K562 (cell line): ENCODE measurements at regions of chr11 and their contacts with region 1.

Region 1: DNA sequence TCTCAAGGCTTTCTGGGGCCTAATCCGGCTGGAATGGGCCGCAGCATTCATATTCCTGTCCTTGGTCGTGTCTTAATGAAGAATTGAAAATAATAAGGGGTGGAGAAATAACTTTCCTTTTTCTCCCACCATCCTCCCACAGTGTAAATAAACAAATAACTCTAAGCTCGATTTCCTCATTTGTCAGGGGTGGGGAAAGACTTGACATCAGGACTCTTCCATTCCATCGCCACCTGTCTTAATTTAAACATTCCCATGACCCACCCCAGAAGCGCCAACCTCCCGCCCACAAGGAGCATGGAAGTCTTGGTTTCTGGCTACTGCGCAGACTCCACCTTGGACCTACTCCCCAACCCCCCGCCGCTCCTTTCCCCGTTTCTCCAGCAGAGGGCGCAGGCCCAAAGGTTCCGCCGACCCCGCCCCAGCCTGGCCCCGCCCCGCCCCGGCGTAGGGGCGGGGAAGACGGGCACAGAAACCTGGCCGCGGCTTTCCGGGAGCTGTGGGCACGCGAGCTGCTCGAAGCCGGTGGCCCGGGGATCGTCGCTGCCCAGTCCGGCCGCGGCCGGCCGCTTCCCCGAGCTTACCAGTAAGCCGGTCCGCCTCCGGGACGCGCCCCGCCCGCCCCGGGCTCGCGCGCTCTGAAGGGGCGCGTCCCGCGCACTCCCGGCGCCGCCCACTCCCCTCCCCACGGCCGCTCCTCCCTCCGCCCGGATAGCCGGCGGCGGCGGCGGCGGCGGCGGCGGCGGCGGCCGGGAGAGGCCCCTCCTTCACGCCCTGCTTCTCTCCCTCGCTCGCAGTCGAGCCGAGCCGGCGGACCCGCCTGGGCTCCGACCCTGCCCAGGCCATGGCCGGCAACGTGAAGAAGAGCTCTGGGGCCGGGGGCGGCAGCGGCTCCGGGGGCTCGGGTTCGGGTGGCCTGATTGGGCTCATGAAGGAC is at the start of gene CBL:
- DNase-seq: peak; percentile 94 to 97 (median 96)
- ATAC-seq: peak; percentile 95
- H3K4me3 ChIP-seq: peak within 1 kb of the TSS; percentile 96
- H3K27ac ChIP-seq: peak within 1 kb of the TSS; percentile 88
- H3K4me1 ChIP-seq: peaks cover 13% of the 10 kb centered on the region in 2 experiments; a peak in 4 of 5 replicates
- H3K27me3 ChIP-seq: no peaks in the 10 kb centered on the region
- CTCF ChIP-seq: peak; percentile 72 to 90 (median 85)
- EP300 ChIP-seq: no peak
- POLR2A ChIP-seq: peak; percentile 68
- RAD21 ChIP-seq: peak; percentile 29 to 55; a peak in 2 of 4 replicates
- polyA plus RNA-seq, gene CBL: 3.2 to 6.2 TPM

Region 2: GRCh38 chr11:119284344-119285157 is 78.7 kb after region 1 on chr11:
- CTCF ChIA-PET with region 1: no interaction called
- POLR2A ChIA-PET with region 1: no interaction called
- in situ Hi-C with region 1: no loop called
- intact Hi-C with region 1: loop called (anchors 1 kb)
- DNase-seq: peak in 2 of 4 experiments; percentile 48 to 60
- ATAC-seq: peak; percentile 96
- H3K4me3 ChIP-seq: no peak overlapping the region
- H3K27ac ChIP-seq: no peak overlapping the region; the same call in 2 of the 3 replicates
- H3K4me1 ChIP-seq: peaks cover 0 to 3% of the 10 kb centered on the region in 2 experiments; a peak in 1 of 5 replicates
- H3K27me3 ChIP-seq: no peaks in the 10 kb centered on the region
- CTCF ChIP-seq: peak; percentile 55 to 73 (median 56); a peak in 5 of 6 replicates
- EP300 ChIP-seq: no peak
- POLR2A ChIP-seq: no peak
- RAD21 ChIP-seq: peak; percentile 68 to 73

Region 3: DNA sequence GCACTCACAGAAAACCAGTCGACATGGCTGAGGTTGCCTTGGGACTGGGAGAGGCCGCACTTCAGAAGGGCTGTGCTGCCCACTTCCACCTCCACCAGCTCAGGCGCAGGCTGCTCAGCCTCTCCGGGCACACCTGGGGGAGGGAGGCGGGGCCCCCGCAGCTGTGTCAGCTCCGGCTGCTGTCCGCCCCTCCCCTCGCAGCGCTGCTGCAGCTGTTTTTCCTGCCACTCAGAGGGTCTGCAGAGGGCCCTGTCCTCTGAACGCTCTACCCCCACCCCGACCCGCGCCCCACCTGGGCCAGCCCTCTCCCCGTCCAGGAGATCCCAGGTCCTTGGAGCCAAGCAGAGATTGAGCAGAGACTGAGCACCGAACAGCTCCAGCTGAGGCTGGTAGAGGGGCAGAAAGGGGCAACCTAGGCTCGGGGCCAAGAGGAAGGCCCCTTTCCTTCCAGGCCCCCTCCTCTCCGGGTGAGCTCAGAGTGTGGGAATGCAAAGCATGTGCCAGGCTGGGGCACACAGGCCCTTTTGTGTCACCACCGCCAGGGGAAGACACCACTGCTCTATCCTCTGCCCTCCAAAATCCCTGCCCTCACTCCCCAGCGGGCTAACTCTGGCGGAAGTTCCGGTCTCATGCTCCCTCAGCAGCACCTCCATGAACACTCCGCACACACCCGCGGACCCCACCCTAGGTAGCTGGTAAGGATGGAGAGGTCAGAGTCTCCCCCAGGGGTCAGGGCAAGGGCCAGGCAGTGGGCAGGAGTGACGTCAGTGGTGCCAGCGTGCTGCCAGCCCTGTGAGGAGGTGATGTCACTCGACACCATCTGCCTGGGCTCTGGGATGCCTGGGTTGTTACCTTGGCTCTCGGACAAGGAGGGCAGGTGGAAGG is 109.5 kb after region 1 on chr11:
- CTCF ChIA-PET with region 1: no interaction called
- POLR2A ChIA-PET with region 1: interaction called, 3 read pairs
- in situ Hi-C with region 1: no loop called
- intact Hi-C with region 1: loop called (anchors 2 kb)
- DNase-seq: peak in 1 of 4 experiments; percentile 27
- ATAC-seq: no peak
- H3K4me3 ChIP-seq: peak overlapping the region; percentile 56; the same call in 1 of the 2 replicates
- H3K27ac ChIP-seq: no peak overlapping the region
- H3K4me1 ChIP-seq: peaks cover 41 to 65% of the 10 kb centered on the region in 2 experiments
- H3K27me3 ChIP-seq: no peaks in the 10 kb centered on the region; a peak in 1 of 5 replicates
- CTCF ChIP-seq: no peak
- EP300 ChIP-seq: no peak
- POLR2A ChIP-seq: no peak
- RAD21 ChIP-seq: no peak